Heart left ventricle (tissue), 16 donors: ENCODE measurements at regions of chr10 and their contacts with region 1.

Region 1: DNA sequence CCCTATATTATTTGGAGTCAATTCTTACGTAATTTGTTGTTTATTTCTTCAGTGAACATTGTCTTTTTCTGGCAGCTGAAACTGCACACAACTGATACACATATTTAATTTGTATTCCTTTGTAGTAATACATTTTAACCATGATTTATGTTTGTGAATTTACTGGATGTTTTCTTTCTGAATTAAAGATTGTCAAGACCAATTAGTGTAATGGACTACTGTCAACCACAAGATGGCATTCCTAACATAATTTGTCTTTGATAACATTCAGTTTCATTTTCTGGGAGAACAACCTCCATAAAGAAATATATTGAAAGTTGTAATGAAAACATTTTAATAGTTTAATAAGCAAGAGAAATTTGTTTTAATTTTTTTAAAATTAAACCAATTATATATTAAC is 10.1 kb downstream of the THNSL1 start:
- DNase-seq: no peak
- ATAC-seq: no peak
- H3K4me3 ChIP-seq: no peak overlapping the region
- H3K27ac ChIP-seq: no peak overlapping the region
- H3K4me1 ChIP-seq: peaks cover 0 to 25% (median 6%) of the 10 kb centered on the region in 12 donors
- H3K27me3 ChIP-seq: no peaks in the 10 kb centered on the region
- CTCF ChIP-seq: peak; percentile 6 to 59 (median 36)
- POLR2A ChIP-seq: no peak

Region 2: DNA sequence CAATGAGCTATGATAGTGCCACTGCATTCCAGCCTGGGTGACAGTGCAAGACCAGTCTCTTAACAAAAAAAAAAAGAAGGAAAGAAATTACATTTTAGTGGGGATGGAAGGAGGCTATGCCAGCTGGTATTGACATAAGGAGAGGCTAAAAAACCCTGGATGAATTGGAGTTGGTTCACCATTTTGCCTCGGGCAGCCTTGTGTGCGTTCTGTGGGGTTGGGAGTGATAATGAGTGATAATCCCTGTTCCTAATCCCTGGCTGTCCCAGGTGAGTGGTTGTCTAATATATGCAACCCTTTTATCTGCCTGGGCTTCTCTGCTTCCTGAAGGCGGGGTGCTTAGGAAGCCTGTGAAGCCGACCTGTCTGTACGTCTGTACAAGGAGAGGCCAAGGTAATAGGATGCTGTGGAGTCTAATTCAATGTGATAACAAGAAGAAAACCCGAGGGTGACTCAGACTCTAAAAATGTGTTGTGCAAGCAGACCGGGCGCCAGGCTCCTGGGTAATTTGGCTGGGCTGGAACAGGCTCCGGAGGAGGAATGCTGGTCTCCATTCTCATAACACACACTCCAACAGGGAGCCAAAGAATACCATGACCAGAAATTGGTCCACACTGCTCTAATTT is 33.4 kb after region 1 on chr10:
- intact Hi-C with region 1: loop called in 1 of 10 experiments (anchors 5 kb)
- DNase-seq: peak in 3 of 5 donors; percentile 23 to 40 (median 24)
- ATAC-seq: peak in 3 of 4 donors; percentile 34 to 62 (median 53)
- H3K4me3 ChIP-seq: no peak overlapping the region
- H3K27ac ChIP-seq: no peak overlapping the region
- H3K4me1 ChIP-seq: peaks cover 0 to 8% (median 0%) of the 10 kb centered on the region in 12 donors
- H3K27me3 ChIP-seq: no peaks in the 10 kb centered on the region
- CTCF ChIP-seq: no peak
- POLR2A ChIP-seq: no peak

Region 3: DNA sequence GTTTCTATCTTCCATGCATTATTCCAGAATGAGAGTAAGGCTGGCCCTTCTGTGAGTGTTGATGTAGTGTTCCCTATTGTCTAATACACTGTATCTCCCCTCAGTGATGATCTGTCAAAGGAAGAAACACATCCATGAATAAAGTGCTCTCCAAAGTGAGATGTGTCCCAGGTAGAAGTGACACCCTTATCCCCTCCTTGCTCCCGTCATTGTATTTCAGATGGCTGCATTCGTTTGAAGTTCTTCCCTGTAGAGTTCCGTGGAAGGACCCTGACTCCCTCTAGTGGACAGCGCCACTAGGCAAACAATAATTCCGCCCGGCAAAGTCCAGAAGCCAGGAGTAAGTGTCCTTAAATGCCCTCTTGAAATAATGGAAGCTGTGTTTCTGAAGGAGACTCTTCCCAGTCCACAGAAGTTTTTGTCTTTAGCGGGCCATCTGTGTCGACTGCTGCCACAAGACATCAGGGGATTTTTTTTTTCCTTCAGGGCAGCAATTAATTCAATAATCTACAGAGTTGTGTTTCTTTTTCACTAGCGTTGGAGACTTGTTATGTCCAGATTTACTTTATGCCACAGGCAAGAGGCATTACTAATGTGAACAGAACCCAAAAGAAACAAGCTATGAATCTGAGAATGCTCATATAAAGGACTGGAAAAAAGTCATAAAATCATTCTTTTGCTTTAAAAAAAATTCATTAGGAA is 54.6 kb after region 1 on chr10:
- intact Hi-C with region 1: loop called in 8 of 10 experiments (anchors 1 to 5 kb)
- DNase-seq: peak; percentile 68 to 88 (median 86)
- ATAC-seq: peak; percentile 88 to 98 (median 96)
- H3K4me3 ChIP-seq: peak overlapping the region in 1 of 12 donors; percentile 22
- H3K27ac ChIP-seq: peak overlapping the region in 8 of 12 donors; percentile 23 to 68 (median 53)
- H3K4me1 ChIP-seq: peaks cover 0 to 26% (median 8%) of the 10 kb centered on the region in 12 donors
- H3K27me3 ChIP-seq: no peaks in the 10 kb centered on the region
- CTCF ChIP-seq: peak; percentile 82 to 97 (median 90)
- POLR2A ChIP-seq: no peak

Region 4: DNA sequence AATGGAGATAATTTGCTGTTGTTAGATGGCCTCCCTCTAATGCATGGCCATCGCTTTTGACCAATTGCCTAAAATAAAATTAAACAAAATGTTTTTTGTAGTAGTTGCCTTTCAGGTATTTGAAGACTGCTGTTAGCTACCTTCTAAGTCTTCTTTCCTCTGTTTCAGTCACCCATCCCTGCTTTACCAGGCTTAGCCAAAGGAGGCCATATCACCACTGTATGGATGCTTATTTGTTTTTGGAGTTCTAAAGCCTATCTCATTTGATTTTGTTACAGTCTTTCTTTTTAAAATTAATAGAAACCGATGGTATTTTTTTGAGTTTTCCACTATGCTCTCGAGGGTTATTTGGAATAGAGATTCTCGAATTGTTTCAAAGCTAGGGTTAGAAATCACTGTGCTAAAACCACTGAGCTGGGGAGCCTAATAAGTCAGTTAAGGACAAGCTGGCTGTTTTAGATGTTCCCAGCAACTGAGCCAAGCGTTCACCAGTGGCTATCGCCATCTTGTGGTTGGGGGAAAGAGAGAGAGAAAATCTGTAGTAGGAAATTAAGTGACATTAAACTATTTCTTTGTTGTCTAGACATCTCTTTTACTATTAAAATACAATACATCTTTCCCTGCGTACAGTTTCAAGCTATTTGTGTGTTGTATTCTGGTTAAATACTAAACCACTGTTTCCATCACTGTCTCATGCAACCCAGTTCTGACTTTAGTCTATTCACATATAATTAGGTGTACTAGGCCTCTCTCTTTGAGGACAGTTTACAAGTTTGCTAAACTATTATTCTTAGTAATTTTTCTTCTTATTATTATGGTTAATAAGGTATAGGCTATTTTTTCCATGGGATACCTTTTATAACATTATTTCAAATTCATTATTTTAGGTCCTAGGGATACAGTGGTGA is 200.6 kb after region 1 on chr10:
- intact Hi-C with region 1: loop called in 1 of 10 experiments (anchors 10 kb)
- DNase-seq: peak in 4 of 5 donors; percentile 21 to 24 (median 22)
- ATAC-seq: peak in 1 of 4 donors; percentile 42
- H3K4me3 ChIP-seq: no peak overlapping the region
- H3K27ac ChIP-seq: no peak overlapping the region
- H3K4me1 ChIP-seq: no peaks in the 10 kb centered on the region
- H3K27me3 ChIP-seq: no peaks in the 10 kb centered on the region
- CTCF ChIP-seq: peak; percentile 44 to 75 (median 60)
- POLR2A ChIP-seq: no peak